GM12878 (cell line): ENCODE measurements at regions of chr11 and their contacts with region 1.

Region 1: GRCh38 chr11:132126973-132127899 is 756.8 kb downstream of the NTM start:
- DNase-seq: no peak
- ATAC-seq: peak; percentile 30; the same call in 1 of the 3 replicates
- H3K4me3 ChIP-seq: no peak overlapping the region
- H3K27ac ChIP-seq: no peak overlapping the region
- H3K4me1 ChIP-seq: peaks cover 3% of the 10 kb centered on the region
- H3K27me3 ChIP-seq: no peaks in the 10 kb centered on the region; a peak in 2 of 4 replicates
- CTCF ChIP-seq: peak; percentile 35 to 57 (median 46); a peak in 4 of 6 replicates
- EP300 ChIP-seq: no peak
- POLR2A ChIP-seq: no peak
- RAD21 ChIP-seq: peak; percentile 78

Region 2: DNA sequence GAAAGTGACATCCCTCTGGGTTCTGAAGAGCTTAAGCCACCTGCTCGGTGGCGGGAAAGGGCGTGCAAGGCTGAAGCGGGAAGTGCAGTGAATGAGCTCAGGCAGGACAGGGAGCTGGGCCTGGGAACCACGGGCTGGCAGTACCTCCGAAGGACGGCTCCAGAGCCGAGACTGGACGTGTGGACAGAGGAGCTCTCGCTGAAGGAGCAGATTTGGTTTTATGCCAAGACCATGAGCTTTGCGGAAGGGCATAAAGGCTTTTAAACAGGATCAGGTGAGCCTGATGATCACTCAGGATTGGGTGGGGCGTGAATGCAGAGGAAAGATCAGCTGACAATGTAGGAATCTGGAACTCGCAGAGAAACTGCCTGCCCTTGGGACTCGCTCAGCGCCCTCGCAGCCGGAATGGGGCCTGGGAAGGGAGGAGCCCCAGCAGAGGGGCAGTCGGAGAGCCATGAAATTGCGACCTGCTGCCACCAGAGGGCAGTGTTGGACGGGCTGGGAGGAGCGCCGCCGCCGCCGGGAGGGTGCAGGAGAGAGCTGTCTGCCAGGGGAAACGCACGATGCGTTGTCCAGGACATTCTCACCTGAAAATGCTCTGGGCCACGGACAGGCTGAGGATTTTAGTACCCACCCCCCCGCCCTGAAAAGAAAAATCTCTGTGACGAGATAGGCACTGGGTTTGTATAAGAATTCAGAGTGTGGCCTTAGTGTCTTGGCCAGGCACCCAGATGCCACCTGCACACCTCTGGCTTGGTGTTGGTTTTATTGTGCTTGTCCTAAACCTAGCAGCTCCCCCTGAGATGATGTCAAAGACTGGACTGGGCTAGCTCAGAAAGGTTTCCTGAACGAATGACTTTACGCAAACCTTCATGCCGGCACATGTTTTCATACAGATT is 432.5 kb before region 1 on chr11:
- CTCF ChIA-PET with region 1: interaction called, 5 read pairs
- POLR2A ChIA-PET with region 1: no interaction called
- RAD21 ChIA-PET with region 1: interaction called, 4 read pairs
- SMC1A ChIA-PET with region 1: no interaction called
- in situ Hi-C with region 1: no loop called
- intact Hi-C with region 1: loop called (anchors 5 kb)
- DNase-seq: no peak
- ATAC-seq: peak; percentile 99
- H3K4me3 ChIP-seq: no peak overlapping the region
- H3K27ac ChIP-seq: no peak overlapping the region
- H3K4me1 ChIP-seq: no peaks in the 10 kb centered on the region
- H3K27me3 ChIP-seq: peaks cover 0 to 3% of the 10 kb centered on the region in 2 experiments; a peak in 2 of 4 replicates
- CTCF ChIP-seq: peak; percentile 81 to 96 (median 94)
- EP300 ChIP-seq: no peak
- POLR2A ChIP-seq: no peak
- RAD21 ChIP-seq: peak; percentile 53

Region 3: DNA sequence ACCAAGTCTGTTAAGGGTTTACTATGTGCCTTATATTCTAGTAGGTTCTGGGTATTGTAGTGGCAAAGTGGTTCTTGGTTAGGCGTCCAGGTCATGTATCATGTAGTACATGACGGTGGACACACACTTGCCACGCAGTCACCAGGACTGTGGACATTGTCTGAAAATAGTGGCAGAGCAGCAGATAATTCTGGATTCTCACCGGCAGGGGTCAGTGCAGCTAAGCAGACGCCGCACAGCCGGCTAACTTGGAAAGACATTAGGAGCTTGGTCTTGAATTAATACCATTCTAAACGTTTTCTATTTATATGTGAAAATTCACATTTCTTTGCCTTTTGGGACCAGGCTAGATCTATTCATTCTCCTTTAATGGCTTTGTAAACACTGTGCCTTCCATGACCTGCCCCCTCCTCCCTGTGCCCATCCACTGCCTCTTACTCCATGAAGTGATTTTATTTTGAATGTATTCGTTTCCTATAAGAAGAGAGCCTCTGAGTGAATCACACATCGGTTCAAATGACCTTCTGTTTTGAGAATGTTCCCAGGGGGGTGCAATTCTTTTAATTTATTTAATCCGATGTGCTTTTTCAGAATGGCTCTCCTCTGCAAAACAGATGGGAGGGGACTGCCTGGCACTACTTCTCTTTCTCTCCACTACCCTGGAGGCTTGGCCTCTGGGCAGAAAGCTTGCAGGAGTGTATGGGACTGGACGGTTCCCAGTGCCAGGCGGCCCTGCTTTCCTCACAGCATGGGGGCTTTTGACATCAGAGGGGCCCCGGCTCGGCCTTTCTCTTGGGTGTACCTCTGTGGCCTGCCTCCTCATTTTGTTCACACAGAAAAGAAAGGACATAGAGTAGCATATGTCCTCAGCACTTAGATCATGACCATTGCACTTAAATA is 378.8 kb before region 1 on chr11:
- CTCF ChIA-PET with region 1: interaction called, 20 read pairs
- POLR2A ChIA-PET with region 1: no interaction called
- RAD21 ChIA-PET with region 1: interaction called, 7 read pairs
- SMC1A ChIA-PET with region 1: interaction called, 8 read pairs
- in situ Hi-C with region 1: no loop called
- intact Hi-C with region 1: loop called (anchors 2 kb)
- DNase-seq: no peak
- ATAC-seq: peak; percentile 92
- H3K4me3 ChIP-seq: no peak overlapping the region
- H3K27ac ChIP-seq: no peak overlapping the region
- H3K4me1 ChIP-seq: no peaks in the 10 kb centered on the region
- H3K27me3 ChIP-seq: no peaks in the 10 kb centered on the region; a peak in 3 of 4 replicates
- CTCF ChIP-seq: peak; percentile 77 to 79 (median 77)
- EP300 ChIP-seq: no peak
- POLR2A ChIP-seq: no peak
- RAD21 ChIP-seq: peak; percentile 63

Region 4: DNA sequence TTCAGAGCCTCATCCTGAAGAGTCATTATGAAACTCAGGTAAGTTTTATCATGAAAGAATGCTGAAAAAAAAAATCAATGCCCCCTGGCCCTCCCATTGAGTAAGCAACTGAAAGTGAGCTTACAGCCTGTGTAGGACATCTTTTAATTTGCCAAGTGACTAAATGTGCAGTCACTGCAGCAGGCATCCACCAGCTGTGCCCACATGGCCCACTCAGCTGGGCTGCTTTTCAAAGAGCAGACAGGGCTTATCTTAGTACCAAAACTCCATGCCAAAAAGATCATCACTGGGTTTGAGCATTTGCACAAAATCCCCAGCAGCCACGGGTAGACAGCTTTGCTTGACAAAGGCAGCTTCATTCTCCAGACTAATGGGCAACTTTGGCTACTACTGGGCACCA is 47.1 kb before region 1 on chr11:
- CTCF ChIA-PET with region 1: no interaction called
- POLR2A ChIA-PET with region 1: no interaction called
- RAD21 ChIA-PET with region 1: no interaction called
- SMC1A ChIA-PET with region 1: no interaction called
- in situ Hi-C with region 1: no loop called
- intact Hi-C with region 1: no loop called
- DNase-seq: no peak
- ATAC-seq: no peak
- H3K4me3 ChIP-seq: no peak overlapping the region
- H3K27ac ChIP-seq: no peak overlapping the region
- H3K4me1 ChIP-seq: no peaks in the 10 kb centered on the region
- H3K27me3 ChIP-seq: no peaks in the 10 kb centered on the region
- CTCF ChIP-seq: no peak
- EP300 ChIP-seq: no peak
- POLR2A ChIP-seq: no peak
- RAD21 ChIP-seq: no peak

Region 5: GRCh38 chr11:132114185-132114584 is 13.1 kb before region 1 on chr11:
- CTCF ChIA-PET with region 1: interaction called, 18 read pairs
- POLR2A ChIA-PET with region 1: no interaction called
- RAD21 ChIA-PET with region 1: no interaction called
- SMC1A ChIA-PET with region 1: interaction called, 4 read pairs
- in situ Hi-C with region 1: no loop called
- intact Hi-C with region 1: no loop called
- DNase-seq: no peak
- ATAC-seq: peak; percentile 81
- H3K4me3 ChIP-seq: no peak overlapping the region
- H3K27ac ChIP-seq: no peak overlapping the region
- H3K4me1 ChIP-seq: no peaks in the 10 kb centered on the region
- H3K27me3 ChIP-seq: peaks cover 0 to 2% of the 10 kb centered on the region in 2 experiments; a peak in 1 of 4 replicates
- CTCF ChIP-seq: peak; percentile 34 to 53 (median 51)
- EP300 ChIP-seq: no peak
- POLR2A ChIP-seq: no peak
- RAD21 ChIP-seq: peak; percentile 58